H1 (cell line): ENCODE measurements at regions of chr15 and their contacts with region 1.

Region 1: GRCh38 chr15:83061680-83062079 is 5.4 kb downstream of the BTBD1 start:
- DNase-seq: no peak
- H3K4me3 ChIP-seq: no peak overlapping the region
- H3K27ac ChIP-seq: no peak overlapping the region
- H3K4me1 ChIP-seq: peaks cover 0 to 21% (median 12%) of the 10 kb centered on the region in 4 experiments; a peak in 5 of 7 replicates
- H3K27me3 ChIP-seq: no peaks in the 10 kb centered on the region
- CTCF ChIP-seq: no peak
- EP300 ChIP-seq: no peak
- POLR2A ChIP-seq: no peak
- RAD21 ChIP-seq: no peak

Region 2: DNA sequence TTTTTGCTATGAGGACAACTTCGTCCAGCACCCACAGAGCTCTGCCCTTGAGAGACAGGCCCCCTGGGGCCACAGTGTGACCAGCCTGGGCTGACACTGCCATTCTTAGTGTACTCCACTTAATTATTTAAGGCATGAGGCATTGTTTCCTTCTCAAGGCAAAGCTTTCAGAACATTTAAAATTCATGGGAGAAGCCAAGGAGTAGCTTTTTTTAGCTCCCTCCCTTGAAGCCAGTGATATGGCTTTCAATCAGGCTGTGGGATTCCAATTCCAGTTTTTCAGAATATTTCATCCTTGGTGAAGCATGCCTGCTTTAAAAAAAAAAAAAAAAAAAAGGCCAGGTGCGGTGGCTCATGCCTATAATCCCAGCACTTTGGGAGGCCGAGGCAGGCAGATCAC is 130.5 kb before region 1 on chr15:
- CTCF ChIA-PET with region 1: no interaction called
- POLR2A ChIA-PET with region 1: no interaction called
- DNase-seq: no peak
- H3K4me3 ChIP-seq: no peak overlapping the region
- H3K27ac ChIP-seq: no peak overlapping the region
- H3K4me1 ChIP-seq: 0 out of 7 replicates have a peak, but pooled peaks cover 0 to 2% (median 0%) of the 10 kb centered on the region in 4 experiments
- H3K27me3 ChIP-seq: no peaks in the 10 kb centered on the region
- CTCF ChIP-seq: no peak
- EP300 ChIP-seq: no peak
- POLR2A ChIP-seq: no peak
- RAD21 ChIP-seq: no peak

Region 3: DNA sequence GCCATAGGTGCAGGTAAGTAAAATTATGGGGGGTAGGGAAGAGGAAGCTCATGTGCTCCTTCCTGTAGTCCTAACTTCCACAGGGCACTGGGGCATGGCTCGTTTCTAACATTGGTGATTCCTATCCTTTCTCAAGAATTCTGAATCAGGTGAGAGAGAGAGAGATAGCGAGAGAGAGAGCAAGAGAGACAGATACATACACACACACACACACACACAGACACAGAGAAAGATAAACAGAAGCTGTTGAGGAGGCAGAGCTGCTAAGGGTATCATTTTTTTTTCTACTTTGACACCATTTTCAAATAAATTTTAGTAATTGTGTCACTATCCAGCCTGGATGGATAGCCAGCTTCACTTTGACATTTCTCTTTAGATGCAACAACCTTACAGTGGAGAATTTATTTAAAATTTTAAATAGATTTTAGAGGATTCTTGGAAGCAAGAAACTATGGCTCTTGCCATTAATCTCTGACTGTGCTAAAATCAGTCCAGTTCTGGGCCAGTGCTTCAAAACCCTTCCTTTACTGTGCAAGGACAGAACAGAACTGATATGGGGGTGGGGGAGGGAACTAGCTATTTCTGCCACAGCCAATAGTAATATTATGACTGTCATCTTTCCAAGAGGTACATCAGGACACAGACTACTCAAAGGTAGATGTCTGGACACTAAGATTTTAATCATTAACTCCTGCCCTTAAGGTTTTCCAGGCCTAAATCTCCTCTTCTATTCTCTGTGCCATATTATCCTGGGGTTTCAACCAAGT is 90.3 kb before region 1 on chr15:
- CTCF ChIA-PET with region 1: no interaction called
- POLR2A ChIA-PET with region 1: no interaction called
- DNase-seq: no peak
- H3K4me3 ChIP-seq: no peak overlapping the region
- H3K27ac ChIP-seq: no peak overlapping the region
- H3K4me1 ChIP-seq: no peaks in the 10 kb centered on the region
- H3K27me3 ChIP-seq: no peaks in the 10 kb centered on the region
- CTCF ChIP-seq: no peak
- EP300 ChIP-seq: no peak
- POLR2A ChIP-seq: no peak
- RAD21 ChIP-seq: no peak

Region 4: GRCh38 chr15:83011271-83012075 is 50.2 kb before region 1 on chr15 and contains the start of gene C15orf40:
- CTCF ChIA-PET with region 1: interaction called, 10 read pairs
- POLR2A ChIA-PET with region 1: interaction called, 5 read pairs
- DNase-seq: peak; percentile 79 to 85
- H3K4me3 ChIP-seq: peak within 1 kb of the TSS; percentile 69 to 97 (median 92)
- H3K27ac ChIP-seq: peak within 1 kb of the TSS; percentile 51; the same call in 1 of the 2 replicates
- H3K4me1 ChIP-seq: peaks cover 3 to 10% (median 7%) of the 10 kb centered on the region in 4 experiments
- H3K27me3 ChIP-seq: peaks cover 0 to 3% (median 0%) of the 10 kb centered on the region in 4 experiments; a peak in 1 of 7 replicates
- CTCF ChIP-seq: peak; percentile 72 to 83 (median 79)
- EP300 ChIP-seq: no peak
- POLR2A ChIP-seq: peak in 1 of 2 experiments; percentile 87; a peak in 2 of 3 replicates
- RAD21 ChIP-seq: peak; percentile 47 to 62; a peak in 3 of 4 replicates
- total RNA-seq, gene C15orf40: 10.7 and 21.8 TPM in 2 replicates

Region 5: DNA sequence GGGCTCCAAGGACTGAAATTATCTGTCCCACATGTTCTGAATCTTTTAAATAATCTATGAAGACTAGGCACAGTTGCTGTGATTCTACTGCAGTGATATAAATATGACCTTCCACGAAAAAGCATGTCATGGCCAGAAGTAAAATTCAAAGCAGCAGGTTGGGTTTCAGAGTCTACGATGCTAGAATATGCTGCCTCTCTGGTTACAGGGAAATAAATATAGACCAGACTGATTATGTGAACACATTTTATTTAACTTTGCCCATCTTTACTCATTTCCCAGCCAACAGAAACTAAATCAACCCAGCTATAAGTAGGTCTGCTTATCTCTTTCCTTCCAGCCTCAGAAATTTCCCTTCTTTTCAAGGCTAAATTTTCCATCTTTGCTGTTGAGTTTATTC is 25.9 kb after region 1 on chr15:
- CTCF ChIA-PET with region 1: no interaction called
- POLR2A ChIA-PET with region 1: no interaction called
- DNase-seq: no peak
- H3K4me3 ChIP-seq: no peak overlapping the region; a peak in 1 of 8 replicates
- H3K27ac ChIP-seq: no peak overlapping the region
- H3K4me1 ChIP-seq: no peaks in the 10 kb centered on the region
- H3K27me3 ChIP-seq: no peaks in the 10 kb centered on the region
- CTCF ChIP-seq: no peak
- EP300 ChIP-seq: no peak
- POLR2A ChIP-seq: no peak
- RAD21 ChIP-seq: no peak

Region 6: DNA sequence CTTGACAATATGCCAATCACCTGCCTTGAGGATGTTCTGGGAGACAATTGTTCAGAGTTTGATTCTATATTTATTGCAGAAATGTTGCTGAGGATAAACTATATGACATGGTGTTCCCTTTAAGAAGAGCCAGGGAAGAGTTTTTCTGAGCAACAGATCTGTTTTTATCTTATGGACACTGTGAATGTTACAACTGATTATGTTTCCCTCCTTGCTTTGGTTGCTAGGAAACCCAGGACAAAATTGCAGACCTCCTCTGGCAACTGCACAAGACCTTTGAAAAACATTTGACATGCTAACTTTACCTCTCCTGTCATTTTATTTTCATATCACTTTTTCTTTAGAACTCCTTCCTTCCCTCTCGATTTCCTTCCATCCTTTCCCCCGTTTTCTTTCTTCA is 37.6 kb after region 1 on chr15:
- CTCF ChIA-PET with region 1: no interaction called
- POLR2A ChIA-PET with region 1: no interaction called
- DNase-seq: no peak
- H3K4me3 ChIP-seq: no peak overlapping the region
- H3K27ac ChIP-seq: no peak overlapping the region
- H3K4me1 ChIP-seq: no peaks in the 10 kb centered on the region
- H3K27me3 ChIP-seq: no peaks in the 10 kb centered on the region
- CTCF ChIP-seq: no peak
- EP300 ChIP-seq: no peak
- POLR2A ChIP-seq: no peak
- RAD21 ChIP-seq: no peak